Caco-2 (cell line): ENCODE measurements at regions of chr3 and their contacts with region 1.

Region 1: GRCh38 chr3:126752303-126752842 is 48.3 kb downstream of the CHCHD6 start:
- DNase-seq: peak; percentile 90 to 91
- H3K4me3 ChIP-seq: no peak overlapping the region
- H3K4me3 Mint-ChIP-seq: peak overlapping the region; percentile 68
- H3K27ac Mint-ChIP-seq: peak overlapping the region; percentile 92
- H3K4me1 ChIP-seq: peaks cover 72% of the 10 kb centered on the region
- H3K4me1 Mint-ChIP-seq: peaks cover 49% of the 10 kb centered on the region
- H3K27me3 ChIP-seq: no peaks in the 10 kb centered on the region
- H3K27me3 Mint-ChIP-seq: no peaks in the 10 kb centered on the region
- CTCF ChIP-seq: peak; percentile 87 to 95

Region 2: GRCh38 chr3:126835898-126836860 is 83.8 kb after region 1 on chr3:
- CTCF ChIA-PET with region 1: interaction called, 12 read pairs
- POLR2A ChIA-PET with region 1: no interaction called
- intact Hi-C with region 1: no loop called
- DNase-seq: no peak
- H3K4me3 ChIP-seq: no peak overlapping the region
- H3K4me3 Mint-ChIP-seq: no peak overlapping the region
- H3K27ac Mint-ChIP-seq: peak overlapping the region; percentile 22
- H3K4me1 ChIP-seq: peaks cover 10% of the 10 kb centered on the region; the same call in 1 of the 2 replicates
- H3K4me1 Mint-ChIP-seq: peaks cover 16% of the 10 kb centered on the region
- H3K27me3 ChIP-seq: no peaks in the 10 kb centered on the region
- H3K27me3 Mint-ChIP-seq: no peaks in the 10 kb centered on the region
- CTCF ChIP-seq: peak in 1 of 2 experiments; percentile 33

Region 3: GRCh38 chr3:126883241-126883640 is 130.9 kb after region 1 on chr3:
- CTCF ChIA-PET with region 1: no interaction called
- POLR2A ChIA-PET with region 1: no interaction called
- intact Hi-C with region 1: loop called (anchors 2 kb)
- DNase-seq: no peak
- H3K4me3 ChIP-seq: no peak overlapping the region
- H3K4me3 Mint-ChIP-seq: no peak overlapping the region
- H3K27ac Mint-ChIP-seq: peak overlapping the region; percentile 91
- H3K4me1 ChIP-seq: peaks cover 58% of the 10 kb centered on the region
- H3K4me1 Mint-ChIP-seq: peaks cover 48% of the 10 kb centered on the region
- H3K27me3 ChIP-seq: no peaks in the 10 kb centered on the region
- H3K27me3 Mint-ChIP-seq: no peaks in the 10 kb centered on the region
- CTCF ChIP-seq: no peak

Region 4: DNA sequence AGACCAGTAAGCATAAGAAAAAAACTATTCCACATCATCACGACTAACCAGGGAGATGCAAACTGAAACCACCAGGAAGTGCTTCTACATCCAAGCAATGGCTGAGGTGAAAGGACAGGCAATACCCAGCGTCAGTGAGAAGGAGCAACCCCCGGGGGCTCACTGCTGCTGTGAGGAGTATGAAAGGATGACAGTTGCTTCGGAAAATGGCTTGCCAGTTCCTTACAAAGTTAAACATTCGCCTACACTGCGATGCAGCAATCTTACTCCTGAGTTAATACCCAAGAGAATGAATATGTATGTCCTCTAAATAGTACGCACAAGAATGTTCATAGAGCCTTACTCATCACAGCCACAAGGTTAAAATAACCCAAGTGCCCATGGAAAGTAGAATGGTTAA is 217.2 kb after region 1 on chr3:
- CTCF ChIA-PET with region 1: no interaction called
- POLR2A ChIA-PET with region 1: no interaction called
- intact Hi-C with region 1: loop called (anchors 5 kb)
- DNase-seq: no peak
- H3K4me3 ChIP-seq: no peak overlapping the region
- H3K4me3 Mint-ChIP-seq: no peak overlapping the region
- H3K27ac Mint-ChIP-seq: no peak overlapping the region
- H3K4me1 ChIP-seq: no peaks in the 10 kb centered on the region
- H3K4me1 Mint-ChIP-seq: peaks cover 8% of the 10 kb centered on the region
- H3K27me3 ChIP-seq: no peaks in the 10 kb centered on the region
- H3K27me3 Mint-ChIP-seq: no peaks in the 10 kb centered on the region
- CTCF ChIP-seq: no peak

Region 5: GRCh38 chr3:127172781-127173515 is 420.6 kb after region 1 on chr3:
- CTCF ChIA-PET with region 1: no interaction called
- POLR2A ChIA-PET with region 1: no interaction called
- intact Hi-C with region 1: loop called (anchors 10 kb)
- DNase-seq: no peak
- H3K4me3 ChIP-seq: no peak overlapping the region
- H3K4me3 Mint-ChIP-seq: no peak overlapping the region
- H3K27ac Mint-ChIP-seq: no peak overlapping the region
- H3K4me1 ChIP-seq: no peaks in the 10 kb centered on the region
- H3K4me1 Mint-ChIP-seq: no peaks in the 10 kb centered on the region
- H3K27me3 ChIP-seq: no peaks in the 10 kb centered on the region; the same call in 1 of the 2 replicates
- H3K27me3 Mint-ChIP-seq: peaks cover 13% of the 10 kb centered on the region
- CTCF ChIP-seq: no peak